ENCODE measurements at regions of chr19 and their contacts with region 1.

Region 1: DNA sequence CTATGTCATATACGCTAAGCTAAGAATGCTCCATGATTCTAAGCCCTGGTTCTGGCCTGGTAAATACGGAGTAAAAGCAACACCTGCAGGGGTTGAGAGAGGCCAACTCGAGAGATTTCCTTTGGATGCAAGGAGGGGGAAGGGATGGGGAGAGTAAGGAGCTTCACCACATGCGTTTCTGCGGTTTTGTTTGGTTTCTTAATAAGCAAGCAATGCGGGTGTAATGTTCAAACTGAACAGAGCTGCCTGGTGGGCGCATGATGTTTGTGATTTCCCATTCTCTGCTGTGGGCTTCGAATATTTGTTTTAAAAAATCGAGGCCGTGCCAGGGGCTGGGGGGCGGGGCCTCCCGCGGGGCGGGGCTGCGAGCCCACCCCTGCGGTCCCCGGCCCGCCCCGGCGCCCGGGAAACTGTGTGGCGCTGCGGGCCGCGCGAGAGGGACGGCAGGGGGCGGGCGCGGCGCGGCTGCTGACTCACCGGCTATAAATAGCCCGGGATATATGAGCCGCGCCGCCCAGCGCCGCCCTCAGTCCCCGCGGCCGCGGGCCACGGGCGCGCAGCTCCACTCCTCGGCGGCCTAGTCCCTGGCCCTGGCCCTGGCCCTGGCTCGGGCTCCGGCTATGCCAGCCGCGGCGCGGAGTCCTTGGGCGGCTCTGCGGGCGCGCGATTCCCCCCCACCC is 5.1 kb downstream of the BBC3 start:
- DNase-seq: peak; percentile 64 to 88
- H3K4me3 ChIP-seq: peak overlapping the region; percentile 99
- H3K27ac ChIP-seq: peak overlapping the region; percentile 57
- H3K4me1 ChIP-seq: peaks cover 38% of the 10 kb centered on the region
- H3K27me3 ChIP-seq: no peaks in the 10 kb centered on the region
- CTCF ChIP-seq: no peak

Region 2: GRCh38 chr19:46271481-46272197 is 954.2 kb before region 1 on chr19:
- CTCF ChIA-PET with region 1: no interaction called
- POLR2A ChIA-PET with region 1: no interaction called
- intact Hi-C with region 1: no loop called
- DNase-seq: peak; percentile 78 to 100
- H3K4me3 ChIP-seq: peak overlapping the region; percentile 19; the same call in 1 of the 2 replicates
- H3K27ac ChIP-seq: peak overlapping the region; percentile 87
- H3K4me1 ChIP-seq: peaks cover 29% of the 10 kb centered on the region
- H3K27me3 ChIP-seq: no peaks in the 10 kb centered on the region
- CTCF ChIP-seq: no peak

Region 3: DNA sequence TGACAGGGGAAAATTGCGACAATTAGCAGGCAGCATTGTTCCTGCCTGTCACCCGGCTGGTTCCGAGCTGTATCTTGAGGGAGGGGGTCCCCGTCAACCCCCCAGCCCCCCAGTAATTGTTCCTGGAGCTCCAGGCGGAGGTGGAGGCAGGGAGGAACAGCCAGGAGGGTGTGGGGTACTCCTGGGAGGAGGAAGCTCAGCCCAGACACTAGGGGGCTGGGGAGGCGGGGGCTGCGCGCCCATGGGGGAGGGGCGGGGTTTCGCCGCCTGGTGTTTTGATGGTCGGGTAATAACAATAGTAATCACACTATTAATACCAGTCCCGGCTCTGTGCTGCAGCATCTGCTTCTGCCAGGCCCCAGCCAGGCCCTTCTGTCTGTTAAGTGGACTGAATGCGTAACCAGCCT is 197.7 kb before region 1 on chr19:
- CTCF ChIA-PET with region 1: interaction called, 12 read pairs
- POLR2A ChIA-PET with region 1: no interaction called
- intact Hi-C with region 1: no loop called
- DNase-seq: no peak
- H3K4me3 ChIP-seq: no peak overlapping the region
- H3K27ac ChIP-seq: no peak overlapping the region
- H3K4me1 ChIP-seq: no peaks in the 10 kb centered on the region
- H3K27me3 ChIP-seq: peaks cover 45% of the 10 kb centered on the region
- CTCF ChIP-seq: no peak

Region 4: GRCh38 chr19:47157431-47158321 is 68.2 kb before region 1 on chr19:
- CTCF ChIA-PET with region 1: interaction called, 3 read pairs
- POLR2A ChIA-PET with region 1: interaction called, 12 read pairs
- intact Hi-C with region 1: no loop called
- DNase-seq: peak; percentile 59 to 78
- H3K4me3 ChIP-seq: no peak overlapping the region
- H3K27ac ChIP-seq: peak overlapping the region; percentile 78
- H3K4me1 ChIP-seq: peaks cover 55% of the 10 kb centered on the region
- H3K27me3 ChIP-seq: no peaks in the 10 kb centered on the region
- CTCF ChIP-seq: 0 out of 2 replicates have a peak, but pooled peaks have one; percentile 15

Region 5: GRCh38 chr19:47243776-47244547 is 18.1 kb after region 1 on chr19:
- CTCF ChIA-PET with region 1: interaction called, 17 read pairs
- POLR2A ChIA-PET with region 1: interaction called, 4 read pairs
- intact Hi-C with region 1: loop called (anchors 2 kb)
- DNase-seq: peak; percentile 86 to 95
- H3K4me3 ChIP-seq: peak overlapping the region; percentile 71
- H3K27ac ChIP-seq: peak overlapping the region; percentile 87
- H3K4me1 ChIP-seq: peaks cover 26% of the 10 kb centered on the region
- H3K27me3 ChIP-seq: no peaks in the 10 kb centered on the region
- CTCF ChIP-seq: peak; percentile 98

Region 6: DNA sequence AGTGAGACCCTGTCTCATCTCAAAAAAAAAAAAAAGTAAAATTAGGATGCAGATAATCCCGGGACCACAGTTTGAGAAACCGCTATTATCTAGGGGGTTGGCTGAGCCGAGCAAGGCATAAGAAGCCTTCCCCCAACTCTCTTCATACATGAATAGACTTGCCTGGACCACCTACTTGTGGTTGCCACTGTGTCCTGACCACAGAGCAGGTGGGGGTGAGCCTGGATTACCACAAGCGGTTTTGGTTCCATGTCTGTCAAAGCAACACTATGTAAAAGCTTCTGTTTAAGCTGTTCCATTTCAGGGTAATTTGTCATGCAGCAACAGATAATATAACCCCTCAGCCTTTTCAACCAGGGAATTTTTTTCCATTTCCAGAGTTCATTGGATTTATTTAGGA is 292.3 kb after region 1 on chr19:
- CTCF ChIA-PET with region 1: no interaction called
- POLR2A ChIA-PET with region 1: no interaction called
- intact Hi-C with region 1: no loop called
- DNase-seq: no peak
- H3K4me3 ChIP-seq: no peak overlapping the region
- H3K27ac ChIP-seq: no peak overlapping the region
- H3K4me1 ChIP-seq: peaks cover 6% of the 10 kb centered on the region
- H3K27me3 ChIP-seq: no peaks in the 10 kb centered on the region
- CTCF ChIP-seq: no peak